Activated B cell treated with CpG ODN at 0.5 μM for 24 hours (primary cell): ENCODE measurements at regions of chr1 and their contacts with region 1.

Region 1: DNA sequence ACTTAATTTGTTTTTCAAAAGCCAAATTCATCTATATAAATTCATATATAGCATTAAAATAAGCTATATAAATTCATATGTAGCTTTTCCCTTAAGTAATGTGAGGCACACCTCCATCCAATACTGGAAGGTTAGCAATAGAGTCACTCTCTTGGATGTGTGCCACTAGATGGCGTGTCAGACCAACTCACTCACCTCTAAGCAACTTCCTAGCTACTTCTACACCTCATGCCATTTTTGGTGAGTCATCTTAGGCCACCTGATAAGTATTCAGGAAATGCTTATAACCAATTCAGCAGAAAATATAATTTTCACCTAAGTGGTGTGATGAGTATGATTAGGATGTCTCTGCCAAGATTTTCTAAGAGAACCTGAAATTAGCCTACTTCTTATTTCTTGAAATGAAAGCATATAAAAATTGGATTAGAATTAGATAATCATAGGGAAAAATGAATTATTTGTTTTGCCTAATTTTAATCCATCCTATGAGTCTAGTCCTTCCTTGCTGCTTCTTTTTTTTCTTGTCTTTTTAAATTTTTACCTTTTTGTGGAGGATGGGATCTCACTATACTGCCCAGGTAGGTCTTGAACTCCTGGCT is 34.4 kb upstream of the TADA1 start:
- DNase-seq: peak; percentile 37
- ATAC-seq: peak; percentile 99
- H3K4me3 Mint-ChIP-seq: no peak overlapping the region
- H3K27ac Mint-ChIP-seq: no peak overlapping the region
- H3K4me1 Mint-ChIP-seq: peaks cover 6% of the 10 kb centered on the region
- H3K27me3 Mint-ChIP-seq: no peaks in the 10 kb centered on the region
- CTCF ChIP-seq: peak; percentile 61

Region 2: DNA sequence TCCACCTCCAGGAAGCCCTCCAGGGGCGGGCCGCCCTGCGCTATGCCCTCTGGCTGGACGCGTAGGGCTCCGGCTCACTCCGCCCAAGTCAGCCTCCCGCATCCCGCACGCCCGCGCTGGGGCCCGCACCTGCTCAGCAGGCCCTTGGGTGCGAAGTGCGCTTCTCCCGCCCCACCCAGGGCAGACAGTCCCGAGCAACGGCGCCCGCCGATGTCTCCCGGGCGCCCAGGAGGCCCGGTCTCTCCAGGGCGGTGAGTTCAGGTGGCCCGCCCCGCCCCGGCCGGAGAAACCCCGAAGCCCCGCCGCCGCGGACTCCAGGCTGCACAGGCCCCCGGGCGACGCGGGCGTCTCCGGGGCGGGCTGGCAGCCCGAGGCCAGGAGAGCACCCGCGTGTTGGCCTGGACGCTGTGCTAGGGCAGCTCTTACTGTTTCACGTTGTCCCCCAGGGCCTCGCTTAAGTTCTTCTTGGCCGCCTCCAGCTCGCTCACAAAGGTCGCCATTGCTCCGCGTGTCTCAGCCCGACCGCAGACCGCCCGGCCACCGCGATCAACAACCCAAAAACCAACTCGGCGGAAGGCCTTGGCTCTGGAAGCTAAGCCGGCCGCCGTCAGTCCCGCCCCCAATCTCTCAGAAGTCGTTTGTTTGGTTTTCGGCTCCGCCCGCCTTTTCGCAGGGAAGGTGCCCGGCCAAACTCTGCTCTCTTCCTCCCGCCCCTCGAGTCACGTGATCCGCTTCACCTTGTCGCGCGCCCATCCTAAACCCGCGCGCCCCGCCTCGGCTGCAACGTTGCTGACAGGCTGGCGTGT is 34.6 kb before region 1 on chr1 and contains the start of gene TADA1:
- CTCF ChIA-PET with region 1: interaction called, 12 read pairs
- POLR2A ChIA-PET with region 1: interaction called, 3 read pairs
- intact Hi-C with region 1: no loop called
- DNase-seq: peak; percentile 94
- ATAC-seq: peak; percentile 93
- H3K4me3 Mint-ChIP-seq: peak within 1 kb of the TSS; percentile 96
- H3K27ac Mint-ChIP-seq: peak within 1 kb of the TSS; percentile 98
- H3K4me1 Mint-ChIP-seq: peaks cover 30% of the 10 kb centered on the region
- H3K27me3 Mint-ChIP-seq: no peaks in the 10 kb centered on the region
- CTCF ChIP-seq: no peak
- total RNA-seq, gene TADA1: 13.6 and 15.3 TPM in 2 replicates

Region 3: GRCh38 chr1:166975361-166976129 is 65.0 kb after region 1 on chr1 and contains the start of gene ILDR2:
- CTCF ChIA-PET with region 1: interaction called, 6 read pairs
- POLR2A ChIA-PET with region 1: no interaction called
- intact Hi-C with region 1: loop called (anchors 2 kb)
- DNase-seq: peak; percentile 51
- ATAC-seq: peak; percentile 88
- H3K4me3 Mint-ChIP-seq: peak within 1 kb of the TSS; percentile 77
- H3K27ac Mint-ChIP-seq: peak within 1 kb of the TSS; percentile 13
- H3K4me1 Mint-ChIP-seq: peaks cover 15% of the 10 kb centered on the region
- H3K27me3 Mint-ChIP-seq: peaks cover 37% of the 10 kb centered on the region
- CTCF ChIP-seq: no peak
- total RNA-seq, gene ILDR2: 1.00 and 1.2 TPM in 2 replicates

Region 4: DNA sequence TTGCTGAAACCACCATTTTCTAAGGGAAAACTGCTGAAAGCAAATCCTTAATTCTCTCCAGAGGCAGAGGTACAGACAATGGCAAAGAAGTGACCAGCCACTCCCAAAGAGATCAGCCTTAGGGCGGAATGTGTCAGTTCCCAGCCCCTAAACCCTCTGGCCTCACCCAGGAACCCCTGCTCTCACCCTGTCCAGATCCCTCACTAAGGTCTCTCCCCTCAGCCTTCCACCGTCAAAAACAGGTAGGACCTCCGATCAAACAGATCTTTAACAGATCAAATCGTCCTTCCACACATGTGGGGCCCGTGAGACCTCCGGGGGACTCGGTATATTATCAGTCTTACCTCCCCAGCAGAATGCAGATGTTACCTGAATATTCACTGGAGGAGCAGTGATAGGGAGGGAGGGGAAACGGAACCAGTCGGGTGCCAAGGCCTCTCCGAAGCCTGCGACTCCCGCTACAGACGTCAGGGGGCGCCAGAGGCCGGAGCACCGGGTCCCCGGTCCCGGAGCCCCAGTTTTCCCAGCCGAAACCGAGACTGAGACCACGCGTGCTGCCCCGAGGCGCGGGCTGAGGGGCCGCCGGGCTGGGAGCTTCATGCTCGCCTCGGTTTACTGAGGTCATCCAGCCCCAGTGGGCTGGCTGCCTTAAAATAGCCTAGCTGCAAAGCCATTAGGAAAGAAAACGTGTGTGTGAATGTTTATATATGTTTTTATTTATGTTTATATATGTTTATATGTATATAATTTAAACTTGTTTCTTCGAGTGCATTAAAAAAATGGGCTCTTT is 156.0 kb after region 1 on chr1:
- CTCF ChIA-PET with region 1: interaction called, 700 read pairs
- POLR2A ChIA-PET with region 1: interaction called, 34 read pairs
- intact Hi-C with region 1: no loop called
- DNase-seq: peak; percentile 76
- ATAC-seq: peak; percentile 94
- H3K4me3 Mint-ChIP-seq: no peak overlapping the region
- H3K27ac Mint-ChIP-seq: no peak overlapping the region
- H3K4me1 Mint-ChIP-seq: no peaks in the 10 kb centered on the region
- H3K27me3 Mint-ChIP-seq: no peaks in the 10 kb centered on the region
- CTCF ChIP-seq: peak; percentile 70

Region 5: GRCh38 chr1:167328816-167329483 is 418.5 kb after region 1 on chr1:
- CTCF ChIA-PET with region 1: no interaction called
- POLR2A ChIA-PET with region 1: no interaction called
- intact Hi-C with region 1: loop called (anchors 5 kb)
- DNase-seq: peak; percentile 33
- ATAC-seq: peak; percentile 80
- H3K4me3 Mint-ChIP-seq: peak overlapping the region; percentile 84
- H3K27ac Mint-ChIP-seq: peak overlapping the region; percentile 97
- H3K4me1 Mint-ChIP-seq: peaks cover 65% of the 10 kb centered on the region
- H3K27me3 Mint-ChIP-seq: no peaks in the 10 kb centered on the region
- CTCF ChIP-seq: no peak

Region 6: DNA sequence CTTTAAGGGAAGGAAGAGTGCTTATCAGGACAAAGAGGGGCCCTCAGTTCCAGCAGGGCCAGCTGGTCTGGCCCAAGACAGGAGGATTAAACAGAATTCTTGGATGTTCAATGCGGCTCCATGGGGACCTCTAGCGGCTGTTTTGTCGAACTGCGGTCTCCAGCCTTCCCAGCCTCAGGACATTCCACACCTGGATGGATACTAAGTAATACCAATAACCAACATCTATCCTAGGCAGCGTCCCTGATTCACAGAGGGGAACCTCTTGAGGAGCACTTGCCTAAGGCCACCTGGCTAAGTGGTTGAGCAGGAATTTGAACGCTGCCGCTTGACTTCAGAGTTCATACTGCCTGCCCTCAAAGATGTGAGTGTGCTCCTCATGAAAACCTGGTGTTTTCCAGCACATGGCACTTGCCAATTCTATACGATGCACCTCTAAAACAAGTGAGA is 623.4 kb after region 1 on chr1:
- CTCF ChIA-PET with region 1: interaction called, 6 read pairs
- POLR2A ChIA-PET with region 1: no interaction called
- intact Hi-C with region 1: loop called (anchors 5 kb)
- DNase-seq: peak; percentile 36
- ATAC-seq: peak; percentile 78
- H3K4me3 Mint-ChIP-seq: no peak overlapping the region
- H3K27ac Mint-ChIP-seq: no peak overlapping the region
- H3K4me1 Mint-ChIP-seq: peaks cover 4% of the 10 kb centered on the region
- H3K27me3 Mint-ChIP-seq: no peaks in the 10 kb centered on the region
- CTCF ChIP-seq: no peak